Right cardiac atrium (tissue), 5 donors: ENCODE measurements at regions of chr22 and their contacts with region 1.

Region 1: DNA sequence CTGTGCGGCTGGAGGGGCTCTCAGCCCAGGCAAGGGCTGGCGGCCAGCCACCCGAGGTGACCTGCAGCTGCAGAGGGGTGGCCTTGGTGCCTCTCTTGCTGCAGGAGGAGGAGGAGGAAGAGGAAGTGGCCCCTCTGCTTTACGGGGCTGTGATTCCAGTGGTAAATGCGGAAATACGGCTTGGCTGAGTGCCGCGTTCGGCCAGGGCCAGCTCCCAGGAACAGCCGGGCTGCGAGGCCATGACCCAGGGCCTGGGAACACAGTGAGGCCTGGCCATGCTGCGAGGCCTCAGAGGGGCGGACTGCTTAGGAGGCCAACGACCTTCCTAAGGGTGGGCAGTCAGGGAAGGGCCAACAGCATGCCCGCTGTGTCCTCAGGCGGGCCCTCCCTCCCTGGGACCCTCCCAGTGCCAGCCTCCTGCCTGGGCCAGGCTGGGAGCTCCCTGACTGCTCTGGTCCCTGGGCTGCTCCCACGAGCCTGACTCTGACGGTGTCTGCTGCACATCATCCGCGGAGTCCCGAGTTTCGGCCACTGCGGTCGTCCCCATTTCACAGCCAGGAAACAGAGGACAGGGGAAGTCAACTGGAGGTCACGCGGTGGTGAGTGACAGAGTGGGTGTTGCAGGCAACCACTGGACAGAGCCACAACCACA is 20.8 kb upstream of the PPARA start:
- DNase-seq: peak; percentile 74 to 92 (median 91)
- ATAC-seq: peak; percentile 32 to 36
- H3K4me3 ChIP-seq: no peak overlapping the region
- H3K27ac ChIP-seq: no peak overlapping the region
- H3K4me1 ChIP-seq: no peaks in the 10 kb centered on the region
- H3K27me3 ChIP-seq: no peaks in the 10 kb centered on the region

Region 2: DNA sequence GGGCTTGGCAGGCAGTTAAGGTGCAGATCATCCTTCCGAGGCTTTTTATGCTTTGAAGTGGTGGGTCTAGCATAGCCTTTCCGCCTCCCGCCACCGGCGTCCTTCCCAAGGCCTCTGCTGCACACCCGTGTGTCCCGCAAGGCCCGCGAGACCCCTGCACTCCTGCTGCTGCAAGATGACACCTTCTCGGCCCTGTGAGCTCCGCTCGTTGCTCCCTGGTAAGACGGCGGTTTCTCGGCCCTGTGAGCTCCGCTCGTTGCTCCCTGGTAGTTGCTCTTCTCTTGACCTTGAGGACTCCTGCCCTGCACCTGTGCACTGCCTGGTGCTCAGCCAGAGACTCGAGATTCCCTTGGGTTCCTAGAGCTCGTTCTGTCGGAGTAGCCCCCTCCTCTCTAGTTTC is 188.1 kb after region 1 on chr22:
- intact Hi-C with region 1: loop called in 2 of 4 experiments (anchors 5 kb)
- DNase-seq: no peak
- ATAC-seq: no peak
- H3K4me3 ChIP-seq: no peak overlapping the region
- H3K27ac ChIP-seq: no peak overlapping the region
- H3K4me1 ChIP-seq: no peaks in the 10 kb centered on the region
- H3K27me3 ChIP-seq: no peaks in the 10 kb centered on the region